ENCODE measurements at regions of chr7 and their contacts with region 1.

Region 1: DNA sequence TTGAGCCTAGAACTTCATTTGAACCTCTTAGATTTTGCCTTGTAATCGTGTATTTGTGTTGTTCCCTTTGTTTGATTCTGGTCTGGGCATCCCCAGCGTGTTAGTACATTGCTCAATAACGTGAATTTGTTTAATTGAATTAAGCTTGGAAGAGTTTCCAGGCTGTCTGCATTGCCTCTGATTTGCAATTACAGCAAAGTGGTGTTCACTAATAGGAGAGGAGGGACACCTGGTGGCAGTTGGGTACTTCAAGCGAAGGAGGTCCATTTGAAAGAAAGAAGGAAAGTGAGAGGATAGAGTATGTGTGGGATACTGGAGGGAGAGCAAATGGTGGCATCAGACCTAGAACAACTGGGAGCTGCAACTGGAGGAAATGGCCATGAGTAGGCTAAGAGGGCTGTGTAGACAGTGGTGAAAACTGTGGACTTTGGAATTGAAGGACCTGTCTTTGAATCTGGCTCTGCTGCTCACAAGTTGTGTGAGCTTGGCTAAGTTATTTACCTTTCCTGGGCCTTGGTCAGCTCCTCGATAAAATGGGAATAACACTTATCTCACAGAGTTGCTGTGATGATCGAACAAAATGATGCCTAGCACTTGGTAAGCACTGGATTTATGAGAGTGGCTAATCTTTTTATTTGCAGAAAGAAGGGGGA is 15.1 kb downstream of the LSMEM1 start:
- DNase-seq: peak in 3 of 4 experiments; percentile 42 to 73 (median 53)
- ATAC-seq: peak; percentile 86
- H3K4me3 ChIP-seq: no peak overlapping the region
- H3K27ac ChIP-seq: no peak overlapping the region
- H3K4me1 ChIP-seq: no peaks in the 10 kb centered on the region
- H3K27me3 ChIP-seq: peaks cover 11 to 13% of the 10 kb centered on the region in 2 experiments
- CTCF ChIP-seq: peak; percentile 75 to 86 (median 75)
- EP300 ChIP-seq: no peak
- POLR2A ChIP-seq: no peak
- RAD21 ChIP-seq: peak; percentile 94 to 95

Region 2: DNA sequence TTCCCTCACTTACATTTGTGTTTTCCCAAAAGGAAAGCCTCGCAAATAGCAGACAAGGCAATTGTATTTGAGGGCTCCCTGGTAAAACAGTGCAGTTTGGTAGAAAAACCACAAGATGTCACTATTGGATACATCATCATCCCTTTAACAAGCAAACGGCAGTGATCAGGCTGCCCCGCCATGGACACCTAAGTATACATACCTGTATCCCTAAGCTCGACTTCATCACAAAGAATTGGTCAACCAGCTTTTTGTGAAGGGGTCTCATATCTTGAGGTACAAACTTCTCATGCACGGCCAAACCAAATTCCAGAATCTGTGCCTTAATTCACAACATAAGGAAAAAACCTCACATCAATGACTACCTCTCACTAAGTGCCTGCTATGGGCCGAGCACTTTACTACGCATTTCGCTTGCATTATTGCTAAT is 754.1 kb before region 1 on chr7:
- CTCF ChIA-PET with region 1: interaction called, 28 read pairs
- POLR2A ChIA-PET with region 1: no interaction called
- in situ Hi-C with region 1: loop called (anchors 5 kb)
- intact Hi-C with region 1: loop called (anchors 1 kb)
- DNase-seq: peak; percentile 74 to 87 (median 82)
- ATAC-seq: peak; percentile 95
- H3K4me3 ChIP-seq: no peak overlapping the region
- H3K27ac ChIP-seq: no peak overlapping the region
- H3K4me1 ChIP-seq: no peaks in the 10 kb centered on the region
- H3K27me3 ChIP-seq: peaks cover 9 to 15% of the 10 kb centered on the region in 2 experiments; a peak in 4 of 5 replicates
- CTCF ChIP-seq: peak; percentile 93 to 98 (median 93)
- EP300 ChIP-seq: no peak
- POLR2A ChIP-seq: no peak
- RAD21 ChIP-seq: peak; percentile 95 to 97

Region 3: DNA sequence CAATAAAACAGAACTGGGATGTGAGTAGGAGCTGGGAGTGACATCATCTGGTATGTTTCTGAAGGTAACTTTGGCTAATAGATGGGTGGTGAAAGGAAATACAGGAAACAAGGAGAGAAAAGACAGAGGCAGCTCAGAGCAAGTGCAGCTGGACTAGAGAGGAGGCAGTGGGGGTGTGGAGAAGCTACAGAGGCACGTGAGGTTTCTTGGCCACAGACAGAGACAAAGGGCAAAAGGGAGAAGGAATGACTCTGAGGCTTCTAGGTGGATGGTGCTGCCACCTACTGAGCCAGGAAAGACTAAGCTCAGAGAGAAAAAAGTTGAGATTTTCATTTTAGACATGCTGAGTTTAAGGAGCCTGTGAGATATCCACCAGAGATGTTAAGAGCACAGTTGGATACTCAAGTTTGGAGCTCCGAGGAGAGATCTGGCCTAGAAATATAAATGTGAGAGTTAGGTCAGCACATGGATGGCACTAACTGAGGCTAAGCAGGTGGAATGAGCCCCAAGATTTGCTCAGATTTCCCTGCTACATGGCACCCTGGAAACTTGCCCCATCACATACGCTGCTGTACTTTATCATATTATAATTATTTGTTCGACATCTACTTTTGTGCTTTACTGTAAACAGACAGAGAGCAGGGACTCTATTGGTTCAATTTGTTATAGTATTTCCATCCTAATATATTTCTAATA is 640.6 kb before region 1 on chr7:
- CTCF ChIA-PET with region 1: no interaction called
- POLR2A ChIA-PET with region 1: no interaction called
- in situ Hi-C with region 1: no loop called
- intact Hi-C with region 1: loop called (anchors 10 kb)
- DNase-seq: peak in 2 of 4 experiments; percentile 19 to 40
- ATAC-seq: peak; percentile 86
- H3K4me3 ChIP-seq: no peak overlapping the region
- H3K27ac ChIP-seq: no peak overlapping the region
- H3K4me1 ChIP-seq: no peaks in the 10 kb centered on the region
- H3K27me3 ChIP-seq: peaks cover 4 to 10% of the 10 kb centered on the region in 2 experiments; a peak in 2 of 5 replicates
- CTCF ChIP-seq: peak; percentile 59 to 62 (median 60)
- EP300 ChIP-seq: no peak
- POLR2A ChIP-seq: no peak
- RAD21 ChIP-seq: peak in 1 of 2 experiments; percentile 43; a peak in 2 of 4 replicates

Region 4: DNA sequence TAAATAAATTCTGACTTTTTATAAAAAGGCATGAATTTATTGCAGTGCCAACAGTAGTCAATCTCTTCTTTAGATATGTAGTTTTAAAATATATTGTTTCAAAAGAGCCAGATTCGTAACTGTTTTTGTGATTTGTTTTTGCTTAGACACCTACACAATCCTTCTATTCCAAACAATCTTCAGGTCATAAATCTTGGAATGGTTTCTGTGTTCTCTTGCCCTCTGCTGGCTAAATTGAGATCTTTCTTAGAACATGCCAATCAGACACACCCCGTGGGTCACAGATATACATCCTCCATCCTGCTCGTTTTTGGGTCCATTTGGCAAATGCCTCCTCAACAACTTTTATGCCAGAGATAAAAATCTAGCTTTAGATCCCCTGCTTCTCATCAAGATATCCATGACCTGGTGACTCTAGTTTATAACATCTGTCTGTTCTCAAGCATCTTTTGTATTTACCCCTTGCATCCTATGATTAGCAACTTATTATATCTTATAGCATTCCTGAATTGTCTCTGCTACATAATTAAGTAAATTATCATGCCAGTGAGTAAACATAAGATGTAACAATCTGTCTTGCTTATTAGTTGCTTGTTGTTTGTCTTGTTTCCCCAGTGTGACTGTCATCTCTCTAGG is 81.0 kb before region 1 on chr7:
- CTCF ChIA-PET with region 1: no interaction called
- POLR2A ChIA-PET with region 1: no interaction called
- in situ Hi-C with region 1: no loop called
- intact Hi-C with region 1: loop called (anchors 5 kb)
- DNase-seq: peak; percentile 56 to 76 (median 68)
- ATAC-seq: peak; percentile 94
- H3K4me3 ChIP-seq: no peak overlapping the region
- H3K27ac ChIP-seq: no peak overlapping the region
- H3K4me1 ChIP-seq: no peaks in the 10 kb centered on the region
- H3K27me3 ChIP-seq: peaks cover 0 to 9% of the 10 kb centered on the region in 2 experiments; a peak in 2 of 5 replicates
- CTCF ChIP-seq: peak; percentile 63 to 82 (median 63)
- EP300 ChIP-seq: no peak
- POLR2A ChIP-seq: no peak
- RAD21 ChIP-seq: peak; percentile 84 to 86

Region 5: GRCh38 chr7:112876877-112877276 is 380.9 kb after region 1 on chr7:
- CTCF ChIA-PET with region 1: no interaction called
- POLR2A ChIA-PET with region 1: no interaction called
- in situ Hi-C with region 1: no loop called
- intact Hi-C with region 1: no loop called
- DNase-seq: no peak
- ATAC-seq: no peak
- H3K4me3 ChIP-seq: no peak overlapping the region
- H3K27ac ChIP-seq: no peak overlapping the region
- H3K4me1 ChIP-seq: no peaks in the 10 kb centered on the region
- H3K27me3 ChIP-seq: peaks cover 0 to 10% of the 10 kb centered on the region in 2 experiments; a peak in 1 of 5 replicates
- CTCF ChIP-seq: no peak
- EP300 ChIP-seq: no peak
- POLR2A ChIP-seq: no peak
- RAD21 ChIP-seq: no peak

Region 6: DNA sequence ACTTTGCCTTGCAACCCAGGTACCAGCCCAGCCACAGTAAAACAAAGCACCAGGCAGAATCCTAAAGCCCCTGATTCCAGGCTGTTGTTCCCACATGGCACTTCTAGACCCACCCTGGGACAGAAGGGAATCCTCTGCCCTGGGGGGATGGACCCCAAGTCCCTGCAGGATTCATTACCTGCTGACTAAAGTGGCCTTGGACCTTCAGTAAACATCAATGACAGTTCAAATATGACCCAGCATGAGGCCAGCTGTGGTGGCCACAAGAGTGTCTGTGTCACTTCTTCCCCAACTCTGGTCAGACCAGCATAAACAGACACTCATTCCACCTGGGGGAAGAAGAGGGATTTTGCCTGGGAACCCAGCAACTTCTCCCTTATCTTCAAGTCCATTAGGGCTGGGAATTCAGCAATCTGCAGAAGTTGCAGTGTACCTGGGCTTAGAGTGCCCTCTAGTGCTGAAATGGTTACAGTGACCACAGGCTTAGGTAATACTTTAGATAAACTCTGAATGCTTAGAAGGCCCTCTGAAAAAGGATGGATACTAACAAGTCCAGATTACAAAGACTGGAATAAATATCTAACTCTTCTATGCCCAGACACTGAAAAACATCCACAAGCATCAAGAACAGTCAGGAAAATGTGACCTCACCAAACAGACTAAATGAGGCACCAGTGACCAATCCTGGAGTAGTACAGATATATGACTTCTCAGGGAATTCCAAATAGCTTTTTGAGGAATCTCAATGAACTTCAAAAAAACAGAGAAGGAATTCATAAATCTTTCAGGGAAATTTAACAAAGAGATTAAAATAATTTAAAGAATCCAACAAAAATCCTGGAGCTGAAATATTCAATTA is 402.7 kb after region 1 on chr7:
- CTCF ChIA-PET with region 1: interaction called, 9 read pairs
- POLR2A ChIA-PET with region 1: no interaction called
- in situ Hi-C with region 1: no loop called
- intact Hi-C with region 1: loop called (anchors 5 kb)
- DNase-seq: peak; percentile 68 to 86 (median 72)
- ATAC-seq: peak; percentile 99
- H3K4me3 ChIP-seq: no peak overlapping the region
- H3K27ac ChIP-seq: no peak overlapping the region
- H3K4me1 ChIP-seq: no peaks in the 10 kb centered on the region; a peak in 1 of 5 replicates
- H3K27me3 ChIP-seq: no peaks in the 10 kb centered on the region
- CTCF ChIP-seq: peak; percentile 88 to 95 (median 91)
- EP300 ChIP-seq: no peak
- POLR2A ChIP-seq: no peak
- RAD21 ChIP-seq: peak; percentile 94 to 97